ENCODE measurements at regions of chr9 and their contacts with region 1.

Region 1: DNA sequence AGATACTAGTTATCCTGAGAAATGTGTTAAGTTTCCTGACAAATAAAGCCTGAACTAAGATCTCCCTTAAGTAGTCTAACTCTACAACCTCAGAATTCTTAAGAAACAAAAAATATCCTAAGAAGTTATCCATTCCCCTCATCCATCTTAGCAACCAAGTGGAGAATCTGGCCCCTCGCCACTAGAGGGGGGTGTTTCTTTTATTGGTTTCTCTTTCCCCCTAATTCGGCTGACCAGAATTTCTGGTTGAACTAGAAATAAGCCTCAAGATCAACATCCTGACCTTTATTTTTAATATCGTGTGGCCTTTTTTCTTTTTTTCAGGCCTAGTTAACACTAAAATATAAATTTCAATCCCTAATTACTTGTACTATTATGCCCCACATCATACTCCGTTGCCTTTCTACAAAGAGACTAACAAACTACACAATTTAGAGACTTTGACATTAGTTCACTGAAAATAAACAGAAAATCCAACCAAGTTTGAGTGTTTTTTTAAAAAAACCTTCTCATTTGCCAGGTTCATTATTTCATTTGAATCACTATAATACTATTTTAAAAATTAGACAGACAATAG is 14.3 kb upstream of the NR4A3 start:
- DNase-seq: peak; percentile 56 to 80 (median 67)
- H3K4me3 ChIP-seq: no peak overlapping the region
- H3K4me3 Mint-ChIP-seq: peak overlapping the region in 1 of 2 donors; percentile 14
- H3K27ac ChIP-seq: no peak overlapping the region
- H3K27ac Mint-ChIP-seq: peak overlapping the region in 1 of 7 donors; percentile 15
- H3K4me1 ChIP-seq: no peaks in the 10 kb centered on the region
- H3K4me1 Mint-ChIP-seq: peaks cover 21% of the 10 kb centered on the region
- H3K27me3 ChIP-seq: no peaks in the 10 kb centered on the region
- H3K27me3 Mint-ChIP-seq: no peaks in the 10 kb centered on the region
- CTCF ChIP-seq: peak; percentile 88

Region 2: DNA sequence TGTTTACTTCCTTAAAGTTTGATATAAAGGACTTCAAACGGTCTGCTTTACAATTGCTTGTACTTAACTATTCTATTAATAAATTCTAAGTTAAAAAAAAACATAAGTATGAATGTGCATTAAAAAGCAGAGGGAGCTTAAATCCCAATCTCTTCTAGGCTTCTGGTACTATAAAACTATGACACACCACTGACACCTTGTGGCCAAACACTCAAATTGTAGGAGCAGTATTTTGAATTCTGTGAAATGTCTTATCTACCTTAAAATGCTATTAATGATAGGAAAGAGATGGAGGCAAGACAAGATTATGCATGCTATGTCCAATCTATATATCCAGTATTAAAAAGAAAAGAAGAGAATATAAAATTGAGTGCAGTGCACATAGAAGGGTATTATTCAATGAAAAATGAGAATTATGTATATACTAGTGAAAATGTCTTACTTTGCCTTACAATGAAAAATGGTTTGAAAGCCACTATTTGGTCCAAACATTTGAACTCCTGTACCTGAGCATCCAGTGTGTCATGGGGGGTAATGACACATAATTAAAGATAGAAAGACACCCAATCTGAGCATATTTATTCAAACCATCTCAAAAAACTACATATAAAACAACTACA is 203.8 kb after region 1 on chr9:
- intact Hi-C with region 1: loop called in 1 of 2 experiments (anchors 10 kb)
- DNase-seq: peak; percentile 43 to 61 (median 58)
- H3K4me3 ChIP-seq: no peak overlapping the region
- H3K4me3 Mint-ChIP-seq: no peak overlapping the region
- H3K27ac ChIP-seq: no peak overlapping the region
- H3K27ac Mint-ChIP-seq: no peak overlapping the region
- H3K4me1 ChIP-seq: no peaks in the 10 kb centered on the region
- H3K4me1 Mint-ChIP-seq: no peaks in the 10 kb centered on the region
- H3K27me3 ChIP-seq: no peaks in the 10 kb centered on the region
- H3K27me3 Mint-ChIP-seq: no peaks in the 10 kb centered on the region
- CTCF ChIP-seq: peak; percentile 82

Measured in CD14-positive monocyte (primary cell).